ENCODE measurements at regions of chr21 and their contacts with region 1.

Region 1: DNA sequence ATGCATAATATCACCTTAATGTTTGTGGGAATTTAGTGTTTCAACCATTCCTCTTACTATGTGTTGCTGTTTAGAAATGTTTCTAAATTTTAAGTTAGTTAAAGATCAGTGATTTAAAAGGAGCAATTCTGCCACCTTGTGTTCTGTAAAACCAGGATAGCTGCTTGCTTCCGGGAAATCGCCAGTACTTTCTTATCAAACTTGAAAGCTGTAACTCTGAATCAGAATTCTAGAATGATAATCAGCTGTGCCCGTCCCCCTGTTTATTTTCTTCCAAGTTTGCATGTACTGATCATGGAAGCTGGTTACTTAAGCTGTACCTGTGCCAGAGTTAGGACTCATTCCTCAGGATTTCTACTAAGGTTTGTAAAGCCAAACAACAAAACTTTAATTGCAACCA is 656.4 kb downstream of the LTN1 start:
- DNase-seq: no peak

Region 2: GRCh38 chr21:26850108-26850643 is 1486.1 kb before region 1 on chr21:
- intact Hi-C with region 1: loop called (anchors 2 kb)
- DNase-seq: no peak

Region 3: GRCh38 chr21:27700974-27701614 is 635.2 kb before region 1 on chr21:
- intact Hi-C with region 1: loop called (anchors 5 kb)
- DNase-seq: peak; percentile 81

Region 4: DNA sequence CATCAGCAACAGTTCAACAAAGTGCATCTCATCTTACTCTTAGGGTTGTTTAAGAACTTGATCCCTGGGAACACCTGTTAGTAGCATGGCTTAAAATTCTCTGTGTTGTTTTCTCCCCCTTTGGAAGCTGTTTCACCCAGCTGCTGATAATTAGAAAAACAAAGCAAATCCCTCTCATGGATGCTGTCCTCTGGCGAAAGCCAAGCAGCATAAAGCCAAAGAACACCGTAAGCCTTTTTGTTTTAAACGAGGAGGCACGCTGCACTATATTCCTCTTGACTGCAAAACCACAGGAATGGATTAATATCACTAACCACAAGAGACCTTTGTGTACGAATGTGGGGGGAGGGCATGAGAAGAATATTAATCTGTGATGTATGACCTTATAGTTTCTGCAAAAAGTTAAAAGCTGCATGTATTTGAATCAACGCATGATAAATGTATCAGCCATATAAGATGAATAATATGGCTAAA is 266.8 kb before region 1 on chr21:
- intact Hi-C with region 1: loop called (anchors 10 kb)
- DNase-seq: no peak

Region 5: DNA sequence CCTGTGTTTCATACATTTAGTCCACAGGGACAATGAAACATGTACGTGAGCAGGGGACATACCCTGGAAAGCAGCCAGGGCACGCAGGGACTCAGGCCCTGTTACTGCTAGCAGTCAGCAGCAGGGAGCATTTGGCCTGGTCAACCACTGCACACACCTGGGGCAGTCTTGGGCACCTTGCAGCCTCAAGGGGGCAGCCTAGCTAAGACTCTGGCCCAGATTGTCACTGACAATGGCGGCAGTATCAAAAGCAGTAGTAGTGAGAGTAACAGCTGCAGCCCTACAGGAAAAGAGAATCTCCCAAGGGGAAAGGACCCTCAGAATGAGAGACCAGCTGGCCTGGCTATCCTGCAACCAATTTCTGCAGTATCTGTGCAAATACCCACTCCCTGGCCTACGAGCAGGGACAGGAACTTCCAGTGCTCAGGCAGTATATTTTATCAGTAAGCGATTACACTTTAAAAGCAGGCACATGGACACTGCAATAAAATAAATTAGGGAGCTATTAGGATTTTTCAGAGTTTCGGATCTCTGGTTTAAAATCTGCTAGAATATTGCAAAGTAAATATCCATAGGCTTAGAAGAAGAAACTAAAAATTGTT is 180.8 kb after region 1 on chr21:
- intact Hi-C with region 1: loop called (anchors 10 kb)
- DNase-seq: peak; percentile 78